Adrenal gland (tissue), 19 donors: ENCODE measurements at regions of chr2 and their contacts with region 1.

Region 1: GRCh38 chr2:95022309-95023221 is 2.9 kb upstream of the MAL start:
- DNase-seq: peak; percentile 41 to 78 (median 65)
- H3K4me3 ChIP-seq: no peak overlapping the region
- H3K27ac ChIP-seq: no peak overlapping the region
- H3K4me1 ChIP-seq: peaks cover 0 to 5% of the 10 kb centered on the region in 2 donors
- H3K27me3 ChIP-seq: peaks cover 49% of the 10 kb centered on the region
- CTCF ChIP-seq: peak; percentile 79 to 86 (median 84)
- POLR2A ChIP-seq: no peak

Region 2: GRCh38 chr2:95106081-95106480 is 83.5 kb after region 1 on chr2:
- intact Hi-C with region 1: loop called in 1 of 2 experiments (anchors 10 kb)
- DNase-seq: peak in 2 of 7 donors; percentile 47 to 51
- H3K4me3 ChIP-seq: no peak overlapping the region
- H3K27ac ChIP-seq: peak overlapping the region in 1 of 5 donors; percentile 40
- H3K4me1 ChIP-seq: no peaks in the 10 kb centered on the region
- H3K27me3 ChIP-seq: no peaks in the 10 kb centered on the region
- CTCF ChIP-seq: no peak
- POLR2A ChIP-seq: no peak

Region 3: GRCh38 chr2:95207111-95207961 is 184.8 kb after region 1 on chr2 and contains the start of gene ZNF892:
- intact Hi-C with region 1: no loop called
- DNase-seq: peak; percentile 84 to 92 (median 86)
- H3K4me3 ChIP-seq: peak within 1 kb of the TSS in 3 of 4 donors; percentile 32 to 81 (median 61)
- H3K27ac ChIP-seq: peak within 1 kb of the TSS in 4 of 5 donors; percentile 45 to 86 (median 71)
- H3K4me1 ChIP-seq: peaks cover 0 to 11% of the 10 kb centered on the region in 2 donors
- H3K27me3 ChIP-seq: no peaks in the 10 kb centered on the region
- CTCF ChIP-seq: peak in 4 of 6 experiments; percentile 19 to 39 (median 30)
- POLR2A ChIP-seq: peak; percentile 28 to 37
- total RNA-seq, gene ZNF892: 1.4 to 4.3 (median 2.2) TPM